Activated CD8-positive, alpha-beta T cell treated with anti-CD3 and anti-CD28 coated beads, Interleukin-2, amount 10 ng/mL, durations not matched to agents 7 days and 5 days (primary cell): ENCODE measurements at regions of chr17 and their contacts with region 1.

Region 1: GRCh38 chr17:28726226-28727130 is at the start of gene TLCD1:
- DNase-seq: peak; percentile 95
- ATAC-seq: peak; percentile 64
- H3K4me3 Mint-ChIP-seq: peak within 1 kb of the TSS; percentile 94
- H3K27ac Mint-ChIP-seq: peak within 1 kb of the TSS; percentile 99
- H3K4me1 Mint-ChIP-seq: peaks cover 64% of the 10 kb centered on the region
- H3K27me3 Mint-ChIP-seq: no peaks in the 10 kb centered on the region
- total RNA-seq, gene TLCD1: 2.8 to 3.0 TPM

Region 2: DNA sequence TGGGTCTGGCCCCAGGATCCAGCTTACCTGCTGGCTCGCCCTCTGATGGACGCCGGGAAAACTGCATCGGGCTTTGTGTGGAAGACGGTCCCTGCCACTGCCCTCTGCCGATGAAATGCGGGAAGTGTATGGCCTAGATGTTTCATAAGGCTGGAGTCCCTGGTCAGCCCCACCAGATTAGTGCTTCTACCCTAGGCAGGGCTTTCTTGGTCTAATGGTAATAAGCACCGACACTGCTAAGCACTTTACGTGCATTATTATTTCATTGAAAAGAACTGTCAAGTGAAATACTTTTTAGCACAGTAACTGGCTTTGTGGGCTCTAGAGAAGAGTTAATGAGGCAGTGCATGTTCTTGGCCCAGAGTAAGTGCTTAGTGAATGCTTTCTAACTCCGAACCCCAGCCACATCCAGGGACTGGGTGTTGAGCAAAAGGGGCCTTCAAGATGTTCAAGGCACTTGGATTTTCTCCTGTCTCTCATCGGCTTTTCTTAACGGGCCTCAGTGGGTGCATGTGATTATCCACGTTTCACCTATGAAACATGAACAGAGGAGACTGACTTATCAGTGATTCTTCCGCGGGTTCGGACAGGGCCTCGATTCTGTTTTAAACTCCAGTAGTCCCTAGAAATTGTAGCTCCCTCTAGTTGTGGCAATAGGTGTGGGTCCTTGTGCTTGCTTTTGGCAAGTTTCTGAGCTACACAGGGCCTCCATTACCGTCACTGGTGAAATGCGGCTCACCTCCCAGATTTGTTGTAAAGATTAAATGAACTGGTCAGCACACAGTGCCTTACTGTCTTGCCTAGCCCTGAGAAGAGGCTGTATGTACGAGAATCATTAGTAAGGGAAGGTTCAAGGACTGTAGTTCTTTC is 23.9 kb after region 1 on chr17:
- CTCF ChIA-PET with region 1: interaction called, 736 read pairs
- POLR2A ChIA-PET with region 1: interaction called, 212 read pairs
- DNase-seq: peak; percentile 95
- ATAC-seq: peak; percentile 83
- H3K4me3 Mint-ChIP-seq: no peak overlapping the region
- H3K27ac Mint-ChIP-seq: peak overlapping the region; percentile 16
- H3K4me1 Mint-ChIP-seq: peaks cover 34% of the 10 kb centered on the region
- H3K27me3 Mint-ChIP-seq: no peaks in the 10 kb centered on the region

Region 3: DNA sequence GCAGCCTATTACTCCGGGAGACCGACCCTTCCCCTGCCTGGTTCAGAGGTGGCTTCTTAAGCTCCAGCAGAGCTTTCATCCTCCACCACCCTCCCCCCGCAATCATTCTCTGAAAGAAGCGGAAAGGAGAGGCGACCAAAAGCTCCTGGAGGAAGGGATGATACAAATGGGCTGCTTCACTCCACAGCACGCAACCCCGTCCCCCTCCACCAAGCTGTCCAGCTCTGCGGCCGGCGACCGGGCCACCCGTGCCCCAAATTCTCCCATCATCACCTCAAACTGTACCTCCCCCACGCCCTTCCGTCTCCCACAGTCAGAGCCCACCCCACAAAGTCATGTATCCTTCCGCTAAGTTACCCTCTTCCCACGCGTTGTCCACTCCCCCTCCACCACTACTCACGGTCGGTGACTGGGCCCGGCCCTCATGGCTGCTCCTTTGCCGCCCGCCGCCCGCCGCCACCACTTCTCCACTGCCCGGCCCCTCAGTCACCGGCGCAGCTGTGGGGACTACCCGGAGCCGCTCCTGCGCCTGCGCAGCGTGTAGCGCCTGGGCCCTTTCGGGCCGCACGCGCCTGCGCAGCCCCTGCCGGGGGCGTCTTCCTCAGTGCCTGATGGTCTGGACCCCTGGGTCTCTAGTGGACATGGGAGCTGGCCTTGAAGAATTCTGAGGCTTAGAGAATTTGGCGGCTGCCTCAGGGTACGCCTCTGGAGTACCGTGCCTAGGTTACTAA is 116.0 kb after region 1 on chr17 and contains the start of gene FAM222B:
- CTCF ChIA-PET with region 1: interaction called, 27 read pairs
- POLR2A ChIA-PET with region 1: interaction called, 14 read pairs
- DNase-seq: peak; percentile 90
- ATAC-seq: peak; percentile 99
- H3K4me3 Mint-ChIP-seq: peak within 1 kb of the TSS; percentile 100
- H3K27ac Mint-ChIP-seq: peak within 1 kb of the TSS; percentile 97
- H3K4me1 Mint-ChIP-seq: peaks cover 28% of the 10 kb centered on the region
- H3K27me3 Mint-ChIP-seq: no peaks in the 10 kb centered on the region
- total RNA-seq, gene FAM222B: 15.4 to 17.1 TPM

Region 4: DNA sequence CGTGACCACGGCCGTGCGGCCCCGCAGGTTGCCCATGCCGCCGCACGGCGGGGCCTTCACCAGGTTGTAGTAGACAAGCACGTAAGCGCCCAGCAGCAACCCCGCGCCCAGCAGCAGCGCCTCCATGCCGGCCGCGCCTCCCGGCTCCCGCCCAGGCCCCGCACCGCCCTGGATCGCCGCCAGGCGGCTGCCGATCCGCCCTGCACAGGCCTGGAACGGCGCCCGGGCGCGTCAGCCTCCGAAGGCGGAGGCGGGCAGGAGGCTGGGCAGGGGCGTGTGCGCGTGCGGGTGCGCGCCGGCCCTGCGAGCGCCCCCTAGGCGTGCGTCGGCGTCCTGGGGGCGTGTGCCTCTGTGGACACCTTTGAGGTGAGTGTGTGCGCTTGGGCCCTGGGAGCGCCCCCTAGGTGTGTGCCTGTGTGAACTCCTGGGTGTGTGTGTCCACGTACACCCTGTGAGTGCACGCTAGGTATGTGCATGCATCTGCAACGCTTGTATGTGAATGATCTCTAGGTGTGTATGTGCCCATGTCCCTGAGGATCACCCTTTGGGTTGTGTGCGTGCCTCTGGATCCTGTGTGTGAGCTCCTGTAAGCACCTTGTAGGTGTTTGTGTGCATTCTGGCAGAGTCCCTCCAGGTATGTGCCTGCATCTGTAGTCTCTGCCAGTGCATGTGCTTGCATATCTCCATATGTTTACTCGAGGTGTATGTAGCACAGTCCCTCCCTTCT is 176.5 kb after region 1 on chr17 and contains the start of gene DHRS13:
- CTCF ChIA-PET with region 1: interaction called, 41 read pairs
- POLR2A ChIA-PET with region 1: interaction called, 14 read pairs
- DNase-seq: peak; percentile 94
- ATAC-seq: peak; percentile 95
- H3K4me3 Mint-ChIP-seq: peak within 1 kb of the TSS; percentile 88
- H3K27ac Mint-ChIP-seq: peak within 1 kb of the TSS; percentile 86
- H3K4me1 Mint-ChIP-seq: peaks cover 36% of the 10 kb centered on the region
- H3K27me3 Mint-ChIP-seq: no peaks in the 10 kb centered on the region
- total RNA-seq, gene DHRS13: 29.2 to 29.3 TPM

Region 5: DNA sequence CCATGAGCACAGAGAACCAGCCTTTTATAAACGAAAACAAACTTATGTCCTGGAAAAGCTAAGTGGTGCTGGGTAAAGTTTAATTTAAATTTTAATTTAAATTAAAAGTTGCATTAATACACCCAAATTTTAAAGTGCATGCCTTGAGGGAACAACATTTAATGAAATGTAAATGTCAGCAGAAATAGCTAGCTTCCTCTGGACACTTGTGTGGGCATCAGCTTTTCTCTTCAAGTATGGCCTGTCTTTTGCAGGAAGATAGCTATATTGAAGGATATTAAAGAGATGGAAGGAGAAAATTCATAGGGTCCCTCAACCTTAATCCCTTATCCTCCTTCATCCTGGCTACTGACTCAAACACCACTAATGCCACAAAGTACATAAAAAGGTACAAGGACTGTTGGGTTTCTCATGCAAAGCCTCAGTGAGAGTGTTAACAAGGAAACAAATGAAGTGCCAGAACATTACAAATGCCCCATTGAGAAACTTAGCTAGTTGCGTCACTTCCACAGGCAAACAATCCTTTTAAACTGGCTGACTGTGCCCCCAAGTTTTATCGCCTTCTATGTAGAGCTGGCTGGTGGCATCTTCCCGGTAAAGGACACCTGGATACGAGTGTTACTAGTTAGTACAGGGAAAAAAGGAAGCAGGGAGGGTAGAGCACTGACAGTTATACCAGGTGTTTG is 210.7 kb after region 1 on chr17:
- CTCF ChIA-PET with region 1: interaction called, 10 read pairs
- POLR2A ChIA-PET with region 1: no interaction called
- DNase-seq: no peak
- ATAC-seq: no peak
- H3K4me3 Mint-ChIP-seq: no peak overlapping the region
- H3K27ac Mint-ChIP-seq: no peak overlapping the region
- H3K4me1 Mint-ChIP-seq: peaks cover 62% of the 10 kb centered on the region
- H3K27me3 Mint-ChIP-seq: no peaks in the 10 kb centered on the region

Region 6: GRCh38 chr17:29116804-29117772 is 390.6 kb after region 1 on chr17:
- CTCF ChIA-PET with region 1: interaction called, 28 read pairs
- POLR2A ChIA-PET with region 1: interaction called, 3 read pairs
- DNase-seq: peak; percentile 81
- ATAC-seq: peak; percentile 59
- H3K4me3 Mint-ChIP-seq: no peak overlapping the region
- H3K27ac Mint-ChIP-seq: no peak overlapping the region
- H3K4me1 Mint-ChIP-seq: peaks cover 9% of the 10 kb centered on the region
- H3K27me3 Mint-ChIP-seq: no peaks in the 10 kb centered on the region